Panc1 (cell line): ENCODE measurements at regions of chr2 and their contacts with region 1.

Region 1: DNA sequence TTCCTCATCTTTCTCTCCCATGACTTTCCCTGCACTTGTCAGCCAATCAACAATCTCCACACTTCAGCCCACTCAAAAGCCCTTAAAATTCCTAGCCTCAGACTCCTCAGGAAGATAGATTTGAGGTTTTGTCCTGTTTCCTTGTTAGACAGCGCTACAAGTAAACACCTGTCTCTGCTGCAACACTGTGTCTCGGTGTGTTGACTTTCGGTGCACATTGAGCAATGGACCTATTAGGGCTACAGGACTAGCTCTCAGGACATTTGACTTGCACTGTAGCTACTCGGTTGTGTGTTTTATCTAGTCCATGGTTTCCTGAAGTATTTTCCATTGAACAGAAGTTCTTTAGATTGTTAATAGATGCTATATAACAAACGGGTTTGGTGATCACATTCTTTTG is 140.9 kb upstream of the XPO1 start:
- DNase-seq: no peak
- ATAC-seq: no peak
- H3K4me3 ChIP-seq: no peak overlapping the region
- H3K27ac ChIP-seq: no peak overlapping the region
- H3K4me1 ChIP-seq: no peaks in the 10 kb centered on the region
- H3K27me3 ChIP-seq: no peaks in the 10 kb centered on the region
- CTCF ChIP-seq: no peak

Region 2: DNA sequence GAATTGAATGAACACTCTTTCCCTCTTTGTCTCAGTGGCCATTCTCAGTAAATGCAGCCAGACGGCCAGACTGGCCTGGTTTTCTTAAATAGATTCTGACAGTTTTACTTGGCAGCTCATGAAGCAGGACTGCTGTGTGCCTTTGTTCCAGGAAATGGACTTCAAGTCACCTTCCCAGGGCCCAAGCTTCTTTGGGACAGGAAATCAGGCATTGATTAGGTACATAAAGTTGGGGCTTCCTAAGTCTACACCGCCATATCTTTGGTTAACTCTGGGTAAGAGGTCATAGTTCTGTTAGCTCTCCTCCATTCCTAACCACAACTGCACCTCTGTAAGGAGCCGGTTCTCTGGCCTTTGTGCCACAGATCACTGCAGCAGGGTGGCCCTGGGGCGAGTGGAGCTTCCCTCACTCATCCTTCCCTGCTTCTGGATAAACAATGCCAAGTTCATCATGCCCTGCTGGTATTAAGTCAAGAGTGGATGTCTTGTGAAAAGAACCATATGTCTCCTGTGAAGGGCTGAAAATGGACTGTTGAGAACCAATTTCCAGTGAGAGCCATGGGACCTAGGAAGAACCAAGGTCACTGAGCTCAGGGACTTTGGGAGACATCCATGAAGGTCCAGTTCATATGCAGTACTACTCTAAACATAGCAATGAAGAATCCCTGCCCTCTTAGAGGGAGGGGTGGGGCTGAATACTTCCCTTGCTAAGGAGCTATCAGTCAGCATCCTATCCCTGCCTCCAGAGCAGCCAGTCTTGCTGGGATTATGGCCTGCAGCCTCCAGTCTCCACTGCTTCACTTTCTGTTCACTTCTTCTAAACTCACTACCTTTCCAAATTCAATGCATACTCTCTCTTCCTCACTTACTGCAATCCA is 18.3 kb before region 1 on chr2:
- CTCF ChIA-PET with region 1: no interaction called
- POLR2A ChIA-PET with region 1: no interaction called
- in situ Hi-C with region 1: no loop called
- intact Hi-C with region 1: no loop called
- DNase-seq: no peak
- ATAC-seq: peak; percentile 50; the same call in 1 of the 2 replicates
- H3K4me3 ChIP-seq: no peak overlapping the region
- H3K27ac ChIP-seq: peak overlapping the region; percentile 57; the same call in 1 of the 2 replicates
- H3K4me1 ChIP-seq: peaks cover 11% of the 10 kb centered on the region; the same call in 1 of the 2 replicates
- H3K27me3 ChIP-seq: no peaks in the 10 kb centered on the region
- CTCF ChIP-seq: no peak

Region 3: DNA sequence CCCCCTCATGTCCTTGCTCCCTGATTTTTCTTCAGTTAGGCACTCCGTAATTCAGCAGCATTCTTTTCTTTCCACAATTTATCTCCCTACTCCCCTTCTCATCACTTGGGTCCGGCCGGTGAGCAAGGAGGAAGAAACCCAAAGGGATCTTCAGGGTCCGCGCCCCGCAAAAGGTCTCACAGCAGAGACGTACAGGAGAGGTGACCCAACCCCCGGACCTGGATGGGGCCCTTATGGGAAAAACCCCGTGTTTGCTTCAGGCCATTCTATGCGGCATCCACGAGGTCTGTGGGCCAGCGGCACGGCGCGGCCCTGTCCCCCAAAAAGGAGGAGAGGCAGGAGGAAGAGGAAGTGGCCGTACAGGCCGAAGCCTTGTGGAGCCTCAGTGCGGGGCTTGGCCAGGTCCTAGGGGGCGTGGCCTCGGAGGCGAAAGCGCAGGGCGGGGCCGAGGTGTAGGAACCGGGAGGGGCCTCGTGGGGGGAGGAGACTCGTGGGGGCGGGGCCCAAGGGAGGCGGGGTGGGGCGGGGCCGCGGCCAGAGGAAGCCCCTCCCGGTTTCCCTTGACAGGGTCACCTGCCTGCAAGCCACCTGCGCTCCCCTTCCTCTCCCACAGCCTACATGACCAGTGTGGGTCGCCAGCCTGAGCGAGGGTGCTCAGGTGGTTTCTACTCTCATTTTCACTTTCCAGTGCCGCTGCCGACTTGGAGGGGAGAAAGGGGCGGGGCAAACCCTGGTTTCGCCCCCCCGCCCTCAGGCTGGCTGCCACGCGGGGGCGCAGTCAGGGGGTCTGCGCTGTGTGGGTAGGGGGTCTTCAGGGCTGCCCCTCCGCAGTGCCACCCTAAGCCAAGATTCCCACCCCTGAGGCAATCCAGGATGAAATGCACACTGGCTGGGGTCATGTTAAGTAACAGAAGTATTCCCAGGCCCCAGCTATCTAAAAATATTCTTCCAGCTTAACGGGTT is 15.5 kb after region 1 on chr2:
- CTCF ChIA-PET with region 1: no interaction called
- POLR2A ChIA-PET with region 1: no interaction called
- in situ Hi-C with region 1: no loop called
- intact Hi-C with region 1: no loop called
- DNase-seq: no peak
- ATAC-seq: peak; percentile 99
- H3K4me3 ChIP-seq: peak overlapping the region; percentile 62 to 69
- H3K27ac ChIP-seq: peak overlapping the region; percentile 92
- H3K4me1 ChIP-seq: peaks cover 12% of the 10 kb centered on the region
- H3K27me3 ChIP-seq: no peaks in the 10 kb centered on the region; the same call in 1 of the 2 replicates
- CTCF ChIP-seq: peak; percentile 89

Region 4: GRCh38 chr2:61727746-61728145 is 48.6 kb after region 1 on chr2:
- CTCF ChIA-PET with region 1: no interaction called
- POLR2A ChIA-PET with region 1: interaction called, 13 read pairs
- in situ Hi-C with region 1: no loop called
- intact Hi-C with region 1: no loop called
- DNase-seq: no peak
- ATAC-seq: no peak
- H3K4me3 ChIP-seq: no peak overlapping the region
- H3K27ac ChIP-seq: no peak overlapping the region
- H3K4me1 ChIP-seq: no peaks in the 10 kb centered on the region
- H3K27me3 ChIP-seq: no peaks in the 10 kb centered on the region; the same call in 1 of the 2 replicates
- CTCF ChIP-seq: no peak